ENCODE measurements at regions of chr11 and their contacts with region 1.

Region 1: DNA sequence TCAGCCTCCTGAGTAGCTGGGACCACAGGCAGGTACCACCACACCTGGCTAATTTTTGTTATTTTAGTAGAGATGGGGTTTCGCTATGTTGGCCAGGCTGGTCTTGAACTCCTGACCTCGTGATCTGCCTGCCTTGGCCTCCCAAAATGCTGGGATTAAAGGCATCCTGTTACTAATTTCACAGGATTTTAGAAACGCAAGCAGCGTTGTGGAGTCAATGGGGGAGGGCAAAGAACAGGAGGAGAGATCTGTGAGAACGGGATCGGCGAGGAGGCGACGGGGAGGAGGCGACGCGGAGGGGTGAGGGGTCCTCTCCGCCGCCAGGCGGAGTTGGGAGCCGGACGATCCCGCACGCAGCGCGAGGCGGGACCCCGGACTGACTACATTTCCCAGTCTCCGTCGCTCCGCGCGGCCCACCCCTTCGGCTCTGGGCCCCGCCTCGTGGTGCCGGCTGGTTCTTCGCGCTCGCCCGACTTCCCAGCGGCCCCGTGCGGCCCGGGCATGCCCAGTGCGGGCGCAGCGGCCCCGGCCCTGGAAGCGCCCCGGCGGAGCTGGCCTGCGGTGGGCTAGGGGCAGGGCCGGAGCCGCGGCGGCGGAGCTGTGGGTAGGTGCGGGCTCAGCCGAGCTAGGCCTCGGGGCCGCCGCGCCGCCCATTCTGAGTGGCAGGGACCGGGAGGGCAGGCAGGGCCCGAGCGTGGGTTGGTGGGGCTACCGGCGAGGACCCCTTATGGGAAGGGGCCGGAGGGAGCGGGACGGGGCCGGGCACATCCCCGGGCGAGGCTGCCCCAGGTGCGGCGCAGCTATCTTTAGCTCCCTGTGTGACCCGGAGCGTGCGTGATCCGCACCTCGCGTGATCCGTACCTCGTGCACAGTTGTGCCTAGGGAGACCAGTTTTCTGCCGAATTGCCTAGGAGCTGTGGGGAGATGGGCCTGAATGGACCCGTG is at the start of gene EI24:
- DNase-seq: peak; percentile 96 to 97
- ATAC-seq: peak; percentile 99
- H3K4me3 ChIP-seq: peak within 1 kb of the TSS; percentile 74 to 86
- H3K27ac ChIP-seq: peak within 1 kb of the TSS in 1 of 2 donors; percentile 38
- H3K4me1 ChIP-seq: peaks cover 0 to 2% of the 10 kb centered on the region in 2 donors
- H3K27me3 ChIP-seq: no peaks in the 10 kb centered on the region
- total RNA-seq, gene EI24: 47.1 to 50.1 TPM

Region 2: DNA sequence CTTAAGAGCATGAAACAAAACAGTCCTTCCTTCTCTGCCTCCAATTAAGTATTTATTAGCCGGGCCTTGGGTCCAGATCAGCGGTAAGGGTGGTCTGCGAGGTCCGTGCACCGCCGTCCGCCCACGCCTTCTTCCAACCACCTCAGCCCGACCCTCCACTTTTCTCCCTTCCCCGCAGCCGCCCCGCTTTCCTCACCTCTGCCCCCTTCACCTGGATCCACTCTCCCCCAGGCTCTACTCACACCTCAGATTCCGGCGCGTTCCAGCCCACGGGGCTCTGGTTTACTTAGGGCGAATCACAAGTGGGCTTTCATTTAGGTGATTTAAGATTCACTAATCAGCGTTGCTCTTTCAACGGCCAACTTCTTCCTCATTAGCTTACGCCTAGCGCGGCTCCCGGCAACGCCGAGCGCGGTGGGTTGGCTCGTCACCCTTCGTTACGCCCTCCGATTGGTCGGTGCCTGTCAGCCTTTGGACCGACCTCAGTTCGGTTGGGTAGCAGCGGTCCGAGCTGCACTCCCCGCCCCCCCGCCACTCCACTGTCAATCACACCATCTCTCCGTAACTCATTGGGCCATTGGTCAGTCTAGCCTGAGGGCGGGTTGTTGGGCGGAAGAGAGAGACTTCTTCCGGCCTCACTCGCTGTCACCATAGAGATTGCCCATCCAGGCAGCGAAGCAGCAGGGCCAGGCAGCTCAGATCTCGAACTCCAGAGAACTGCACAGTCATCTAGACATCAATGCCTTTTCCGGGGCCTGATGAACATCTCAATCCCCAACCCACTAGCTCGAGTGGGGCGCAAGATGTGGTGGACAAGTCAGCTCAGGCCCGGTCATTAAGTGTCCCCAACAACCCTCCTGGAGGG is 457.7 kb before region 1 on chr11 and contains the start of gene TMEM218:
- intact Hi-C with region 1: loop called in 1 of 2 experiments (anchors 5 kb)
- DNase-seq: peak; percentile 100
- ATAC-seq: peak; percentile 100
- H3K4me3 ChIP-seq: peak within 1 kb of the TSS; percentile 67 to 78
- H3K27ac ChIP-seq: peak within 1 kb of the TSS in 1 of 2 donors; percentile 53
- H3K4me1 ChIP-seq: peaks cover 0 to 3% of the 10 kb centered on the region in 2 donors
- H3K27me3 ChIP-seq: no peaks in the 10 kb centered on the region
- total RNA-seq, gene TMEM218: 9.9 to 16.9 TPM

Region 3: GRCh38 chr11:125494974-125495725 is 74.1 kb before region 1 on chr11:
- intact Hi-C with region 1: loop called in 1 of 2 experiments (anchors 10 kb)
- DNase-seq: peak; percentile 62 to 89
- ATAC-seq: peak; percentile 82
- H3K4me3 ChIP-seq: peak overlapping the region; percentile 64 to 97
- H3K27ac ChIP-seq: peak overlapping the region in 1 of 2 donors; percentile 83
- H3K4me1 ChIP-seq: no peaks in the 10 kb centered on the region
- H3K27me3 ChIP-seq: no peaks in the 10 kb centered on the region